ENCODE measurements at regions of chr22 and their contacts with region 1.

Region 1: GRCh38 chr22:35627264-35628041 is 10.3 kb upstream of the MB start:
- DNase-seq: peak; percentile 84 to 90 (median 86)
- ATAC-seq: peak; percentile 78 to 84 (median 82)
- H3K4me3 ChIP-seq: peak overlapping the region; percentile 59 to 71 (median 69)
- H3K27ac ChIP-seq: peak overlapping the region; percentile 76 to 80 (median 78)
- H3K4me1 ChIP-seq: peaks cover 0 to 11% (median 0%) of the 10 kb centered on the region in 4 donors
- H3K27me3 ChIP-seq: no peaks in the 10 kb centered on the region
- CTCF ChIP-seq: peak; percentile 45 to 58 (median 54)
- POLR2A ChIP-seq: peak; percentile 61

Region 2: DNA sequence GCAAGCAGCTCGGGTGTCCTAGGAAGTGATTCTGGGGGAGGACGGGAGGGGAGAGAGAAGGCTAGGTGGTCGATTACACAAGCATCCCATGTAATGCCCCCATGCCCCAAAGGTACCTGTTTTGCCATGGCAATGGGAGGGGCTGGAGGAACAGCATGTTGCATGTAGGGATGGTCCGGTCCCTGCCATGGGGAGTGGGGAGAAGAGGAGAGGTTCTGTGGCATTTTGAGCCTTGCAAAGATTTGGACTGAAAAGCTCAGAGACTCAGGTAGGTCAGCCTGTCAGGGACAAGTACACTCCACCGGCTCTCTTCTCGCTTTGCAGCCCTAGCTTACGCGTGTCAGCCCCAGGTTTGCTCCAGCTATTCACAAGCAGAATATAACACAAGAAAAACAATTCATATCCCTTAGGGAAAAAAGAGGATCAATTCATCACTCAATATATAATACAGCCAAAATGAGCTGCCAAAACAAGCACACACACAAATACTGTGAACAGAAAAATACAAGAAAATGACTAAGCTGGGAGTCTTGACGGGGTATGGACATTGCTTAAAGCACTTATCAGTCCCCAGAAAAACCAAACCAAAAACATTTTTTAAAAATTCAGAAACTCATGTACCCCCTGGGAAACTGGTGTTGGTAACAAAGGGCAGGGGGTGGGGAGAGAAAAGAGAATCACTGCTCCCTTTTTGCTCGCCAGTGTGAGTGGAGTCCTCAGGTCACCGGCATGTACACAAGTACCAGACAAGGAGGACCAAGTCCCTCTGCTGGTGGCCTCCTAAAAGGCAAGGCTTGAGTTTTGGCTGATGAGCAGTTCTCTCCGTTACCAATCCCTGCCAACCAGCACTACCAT is 111.8 kb after region 1 on chr22:
- intact Hi-C with region 1: loop called (anchors 10 kb)
- DNase-seq: no peak
- ATAC-seq: peak; percentile 54 to 63 (median 60)
- H3K4me3 ChIP-seq: no peak overlapping the region
- H3K27ac ChIP-seq: no peak overlapping the region
- H3K4me1 ChIP-seq: peaks cover 0 to 22% (median 1%) of the 10 kb centered on the region in 4 donors
- H3K27me3 ChIP-seq: no peaks in the 10 kb centered on the region
- CTCF ChIP-seq: peak in 3 of 4 donors; percentile 27 to 33 (median 29)
- POLR2A ChIP-seq: no peak

Region 3: DNA sequence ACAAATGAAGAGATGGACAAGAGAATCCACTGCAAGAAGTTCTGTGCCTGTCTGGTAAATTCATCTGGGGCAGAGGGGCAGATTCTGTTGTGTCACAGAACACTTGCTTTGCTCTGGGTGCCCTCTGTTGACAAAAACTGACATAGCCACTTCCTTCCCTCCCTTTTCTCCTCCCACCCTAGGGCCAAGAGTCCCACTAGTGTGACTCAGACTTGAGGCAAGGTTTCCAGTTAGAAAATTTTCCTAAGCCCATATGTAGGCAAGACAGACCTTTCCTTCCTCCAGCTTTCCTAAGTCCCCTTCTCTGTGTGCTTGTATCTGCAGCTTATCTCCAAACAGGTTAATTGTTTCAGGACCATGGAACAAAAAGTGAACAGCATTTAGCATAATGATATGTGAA is 294.3 kb after region 1 on chr22:
- intact Hi-C with region 1: loop called in 1 of 2 experiments (anchors 10 kb)
- DNase-seq: peak in 1 of 3 donors; percentile 68
- ATAC-seq: peak; percentile 84 to 94 (median 92)
- H3K4me3 ChIP-seq: no peak overlapping the region
- H3K27ac ChIP-seq: peak overlapping the region; percentile 45 to 60 (median 48)
- H3K4me1 ChIP-seq: peaks cover 0 to 42% (median 20%) of the 10 kb centered on the region in 4 donors
- H3K27me3 ChIP-seq: no peaks in the 10 kb centered on the region
- CTCF ChIP-seq: peak; percentile 55 to 71 (median 68)
- POLR2A ChIP-seq: no peak

Measured in right lobe of liver (tissue), 6 donors.